ENCODE measurements at regions of chr19 and their contacts with region 1.

Region 1: DNA sequence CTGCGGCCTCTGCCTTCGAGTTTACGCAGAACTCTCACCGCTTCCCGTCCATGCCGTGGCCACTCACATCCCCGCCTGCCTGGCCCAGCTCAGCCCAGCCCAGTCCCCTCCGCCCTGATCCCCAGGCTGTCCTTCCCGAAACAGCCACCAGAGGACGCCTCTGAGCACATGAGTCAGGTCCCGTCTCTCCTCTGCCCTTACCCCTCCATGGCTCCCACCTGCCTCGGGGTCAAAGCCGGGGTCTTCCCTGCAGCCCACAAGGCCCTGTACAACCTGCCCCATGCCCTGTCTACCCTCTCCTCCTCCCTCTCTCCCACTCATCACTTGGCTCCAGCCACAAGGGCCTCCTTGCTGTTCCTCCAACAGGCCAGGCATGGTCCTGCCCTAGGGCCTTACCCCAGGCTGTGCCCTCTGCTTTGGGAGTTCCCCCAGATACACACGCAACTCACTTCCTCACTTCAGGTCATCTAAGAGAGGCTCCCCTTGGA is 8.1 kb upstream of the SEMA6B start:
- DNase-seq: no peak
- H3K4me3 ChIP-seq: no peak overlapping the region
- H3K27ac ChIP-seq: no peak overlapping the region
- H3K4me1 ChIP-seq: no peaks in the 10 kb centered on the region
- H3K27me3 ChIP-seq: no peaks in the 10 kb centered on the region
- CTCF ChIP-seq: peak; percentile 78 to 89

Region 2: DNA sequence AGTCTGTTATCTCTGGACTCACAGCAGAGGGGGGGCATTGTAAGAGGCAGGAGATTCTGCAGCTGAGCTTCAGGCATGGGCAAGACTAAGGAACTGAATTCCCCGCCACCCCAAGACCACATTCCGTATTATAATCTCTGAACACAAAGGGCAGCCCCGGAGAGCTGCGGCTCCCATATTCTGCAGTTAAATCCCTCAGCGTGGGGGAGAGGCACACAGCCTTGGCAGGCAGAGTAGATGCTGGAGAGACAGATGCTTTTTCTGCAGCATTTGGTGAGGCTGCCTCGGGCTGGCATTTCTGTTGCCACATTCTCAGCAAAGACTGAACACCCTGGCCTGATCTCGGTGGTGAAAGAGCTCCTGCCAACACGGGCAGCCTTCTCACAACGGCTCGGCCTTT is 152.3 kb before region 1 on chr19:
- CTCF ChIA-PET with region 1: no interaction called
- dilution Hi-C with region 1: loop called (anchors 5 kb)
- in situ Hi-C with region 1: no loop called
- intact Hi-C with region 1: no loop called
- DNase-seq: no peak
- H3K4me3 ChIP-seq: no peak overlapping the region
- H3K27ac ChIP-seq: no peak overlapping the region
- H3K4me1 ChIP-seq: no peaks in the 10 kb centered on the region
- H3K27me3 ChIP-seq: no peaks in the 10 kb centered on the region
- CTCF ChIP-seq: no peak

Region 3: GRCh38 chr19:4620675-4621074 is 53.0 kb after region 1 on chr19:
- CTCF ChIA-PET with region 1: interaction called, 19 read pairs
- dilution Hi-C with region 1: no loop called
- in situ Hi-C with region 1: no loop called
- intact Hi-C with region 1: no loop called
- DNase-seq: no peak
- H3K4me3 ChIP-seq: no peak overlapping the region
- H3K27ac ChIP-seq: no peak overlapping the region
- H3K4me1 ChIP-seq: no peaks in the 10 kb centered on the region
- H3K27me3 ChIP-seq: no peaks in the 10 kb centered on the region
- CTCF ChIP-seq: no peak

Region 4: DNA sequence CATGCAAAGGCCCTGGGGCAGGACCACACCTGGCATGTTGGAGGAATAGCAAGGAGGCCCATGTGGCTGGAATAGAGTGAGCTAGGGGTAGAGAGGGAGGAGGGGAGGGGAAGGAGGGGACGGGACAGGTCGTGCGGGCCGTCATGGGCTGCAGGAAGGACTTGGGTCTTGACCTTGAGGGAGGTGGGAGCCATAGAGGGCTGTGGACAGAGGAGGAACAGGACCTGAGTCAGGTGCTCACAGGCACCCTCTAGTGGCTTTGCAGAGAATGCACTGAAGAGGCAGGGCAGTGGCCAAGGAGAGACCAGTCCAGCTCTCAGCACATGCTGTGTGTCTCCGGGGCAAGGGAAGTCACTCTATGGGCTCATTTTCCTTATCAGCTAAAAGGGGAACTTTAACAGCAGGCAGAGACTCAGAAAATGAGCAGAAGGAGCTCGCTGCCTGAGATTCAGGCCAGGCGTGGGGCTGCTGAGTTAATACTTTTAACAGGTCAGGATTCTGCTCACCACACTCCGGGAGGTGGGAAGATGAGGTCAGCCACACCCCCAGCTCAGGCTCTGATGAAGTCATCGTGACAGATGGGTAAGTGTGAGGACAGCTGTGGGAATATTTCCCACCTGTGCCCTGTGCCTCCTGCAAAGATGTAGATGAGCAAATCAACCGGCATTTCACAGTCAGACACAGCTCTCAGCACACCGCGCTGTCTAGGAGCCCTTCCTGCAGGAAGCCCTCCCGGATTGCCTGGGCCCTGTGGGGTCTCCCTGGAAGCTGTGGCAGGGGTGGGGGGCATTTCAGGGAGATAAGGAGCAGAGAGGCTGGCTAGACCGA is 65.7 kb after region 1 on chr19:
- CTCF ChIA-PET with region 1: interaction called, 10 read pairs
- dilution Hi-C with region 1: no loop called
- in situ Hi-C with region 1: loop called in 1 of 2 experiments (anchors 10 kb)
- intact Hi-C with region 1: loop called (anchors 2 kb)
- DNase-seq: peak; percentile 84
- H3K4me3 ChIP-seq: no peak overlapping the region
- H3K27ac ChIP-seq: no peak overlapping the region
- H3K4me1 ChIP-seq: peaks cover 29% of the 10 kb centered on the region
- H3K27me3 ChIP-seq: no peaks in the 10 kb centered on the region
- CTCF ChIP-seq: peak; percentile 88 to 90

Region 5: GRCh38 chr19:4647676-4648644 is 80.3 kb after region 1 on chr19:
- CTCF ChIA-PET with region 1: no interaction called
- dilution Hi-C with region 1: loop called (anchors 5 kb)
- in situ Hi-C with region 1: no loop called
- intact Hi-C with region 1: no loop called
- DNase-seq: no peak
- H3K4me3 ChIP-seq: no peak overlapping the region
- H3K27ac ChIP-seq: no peak overlapping the region
- H3K4me1 ChIP-seq: no peaks in the 10 kb centered on the region
- H3K27me3 ChIP-seq: no peaks in the 10 kb centered on the region
- CTCF ChIP-seq: no peak

Measured in mammary epithelial cell (primary cell).